GM13977 (cell line): ENCODE measurements at regions of chr2 and their contacts with region 1.

Region 1: GRCh38 chr2:172084734-172085459 is 410 bp upstream of the DLX1 start:
- DNase-seq: peak; percentile 92
- CTCF ChIP-seq: no peak

Region 2: GRCh38 chr2:171811245-171811628 is 273.7 kb before region 1 on chr2:
- in situ Hi-C with region 1: loop called (anchors 25 kb)
- DNase-seq: peak; percentile 12
- CTCF ChIP-seq: peak; percentile 35